ENCODE measurements at regions of chr5 and their contacts with region 1.

Region 1: DNA sequence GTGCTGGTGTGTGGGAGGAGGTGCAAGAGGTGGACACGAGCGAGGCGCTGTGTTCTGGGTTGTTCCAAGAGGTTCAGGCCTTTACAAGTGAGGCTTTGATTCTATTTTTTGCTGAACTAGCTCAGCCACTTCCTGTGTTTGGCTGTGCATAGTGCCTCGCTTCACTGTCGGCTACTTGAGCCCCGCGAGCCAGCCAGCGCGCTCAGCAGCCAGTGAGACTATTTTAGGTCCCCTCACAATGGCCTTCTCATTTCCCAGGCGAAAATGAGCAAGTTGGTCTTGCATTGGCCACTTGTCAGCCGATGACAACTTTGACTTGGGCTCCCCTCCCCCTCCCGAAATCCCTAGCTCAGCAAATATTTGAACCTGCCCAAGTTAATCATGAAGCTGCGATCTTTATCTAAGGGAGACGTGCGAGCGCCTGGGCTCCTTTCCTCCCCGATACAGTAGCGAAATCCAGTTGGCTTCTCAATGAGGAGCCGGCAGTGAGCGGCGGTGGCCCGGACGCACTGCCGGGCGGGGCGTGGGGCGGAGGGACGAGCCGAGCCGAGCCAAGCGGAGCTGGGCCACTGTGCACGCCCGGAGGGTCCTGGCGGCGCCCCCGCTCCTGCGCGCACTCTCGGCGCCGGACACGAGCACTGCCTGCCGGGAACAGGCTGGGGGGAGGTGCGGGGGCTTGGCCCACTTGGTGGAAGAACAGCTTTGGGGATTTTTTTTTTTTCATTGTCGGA is 72.6 kb downstream of the PIK3R1 start:
- DNase-seq: peak; percentile 78
- H3K4me3 ChIP-seq: peak overlapping the region; percentile 77
- H3K27ac ChIP-seq: peak overlapping the region; percentile 25
- H3K4me1 ChIP-seq: peaks cover 61% of the 10 kb centered on the region
- H3K27me3 ChIP-seq: no peaks in the 10 kb centered on the region

Region 2: DNA sequence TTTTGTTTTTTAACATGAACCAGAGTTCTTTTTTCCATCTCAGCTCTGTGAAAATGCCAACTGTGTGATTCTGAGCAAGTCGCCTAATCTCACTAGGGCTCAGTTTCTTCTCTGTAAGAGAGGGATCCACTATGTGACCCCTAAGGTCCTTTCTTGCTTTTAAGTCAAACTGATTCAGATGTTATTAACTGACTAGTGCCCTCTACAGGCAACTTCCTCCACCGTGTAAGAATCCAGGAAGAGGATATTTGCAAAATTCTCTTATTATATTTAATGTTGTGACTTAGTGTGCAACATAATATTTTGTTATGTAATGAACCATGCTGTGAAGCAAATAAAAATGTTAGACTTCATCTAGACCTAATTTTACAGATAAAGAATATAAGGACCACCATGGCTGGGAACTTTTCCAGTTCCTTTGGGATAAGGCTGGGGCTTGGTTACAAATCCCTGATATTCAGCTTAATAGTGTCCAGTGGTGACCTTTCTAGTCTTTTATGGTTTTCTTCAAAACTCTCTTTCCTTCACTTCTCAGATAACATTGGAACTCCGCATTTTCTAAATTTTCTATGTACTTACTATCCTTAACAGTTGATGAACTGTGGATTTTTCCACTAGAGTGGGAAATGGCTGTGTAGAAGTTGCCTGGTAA is 172.1 kb after region 1 on chr5:
- in situ Hi-C with region 1: loop called (anchors 5 kb)
- DNase-seq: peak; percentile 71
- H3K4me3 ChIP-seq: no peak overlapping the region
- H3K27ac ChIP-seq: no peak overlapping the region
- H3K4me1 ChIP-seq: peaks cover 18% of the 10 kb centered on the region
- H3K27me3 ChIP-seq: no peaks in the 10 kb centered on the region